Colonic mucosa (tissue), 4 donors: ENCODE measurements at regions of chr6 and their contacts with region 1.

Region 1: GRCh38 chr6:54574404-54575081 is 266.3 kb downstream of the TINAG start:
- DNase-seq: no peak
- H3K4me3 ChIP-seq: no peak overlapping the region
- H3K27ac ChIP-seq: no peak overlapping the region
- H3K4me1 ChIP-seq: no peaks in the 10 kb centered on the region
- H3K27me3 ChIP-seq: no peaks in the 10 kb centered on the region
- CTCF ChIP-seq: no peak

Region 2: GRCh38 chr6:53869952-53870351 is 704.6 kb before region 1 on chr6:
- intact Hi-C with region 1: loop called (anchors 10 kb)
- DNase-seq: no peak
- H3K4me3 ChIP-seq: no peak overlapping the region
- H3K27ac ChIP-seq: no peak overlapping the region
- H3K4me1 ChIP-seq: no peaks in the 10 kb centered on the region
- H3K27me3 ChIP-seq: no peaks in the 10 kb centered on the region
- CTCF ChIP-seq: no peak